CD8-positive, alpha-beta memory T cell (primary cell): ENCODE measurements at regions of chr16 and their contacts with region 1.

Region 1: GRCh38 chr16:48632137-48632774 is 22.3 kb upstream of the N4BP1 start:
- DNase-seq: no peak
- H3K4me3 ChIP-seq: no peak overlapping the region
- H3K4me3 Mint-ChIP-seq: no peak overlapping the region
- H3K27ac ChIP-seq: no peak overlapping the region
- H3K27ac Mint-ChIP-seq: no peak overlapping the region
- H3K4me1 ChIP-seq: no peaks in the 10 kb centered on the region
- H3K4me1 Mint-ChIP-seq: peaks cover 4 to 7% (median 7%) of the 10 kb centered on the region in 3 donors
- H3K27me3 ChIP-seq: no peaks in the 10 kb centered on the region
- H3K27me3 Mint-ChIP-seq: peaks cover 6 to 17% of the 10 kb centered on the region in 2 donors

Region 2: GRCh38 chr16:48318630-48319029 is 313.6 kb before region 1 on chr16:
- CTCF ChIA-PET with region 1: interaction called, 14 read pairs
- POLR2A ChIA-PET with region 1: no interaction called
- DNase-seq: peak in 3 of 5 donors; percentile 47 to 71 (median 56)
- H3K4me3 ChIP-seq: peak overlapping the region; percentile 40
- H3K4me3 Mint-ChIP-seq: peak overlapping the region; percentile 26 to 75 (median 66)
- H3K27ac ChIP-seq: no peak overlapping the region
- H3K27ac Mint-ChIP-seq: peak overlapping the region; percentile 36 to 89 (median 72)
- H3K4me1 ChIP-seq: peaks cover 22% of the 10 kb centered on the region
- H3K4me1 Mint-ChIP-seq: peaks cover 28 to 48% (median 39%) of the 10 kb centered on the region in 3 donors
- H3K27me3 ChIP-seq: no peaks in the 10 kb centered on the region
- H3K27me3 Mint-ChIP-seq: no peaks in the 10 kb centered on the region

Region 3: DNA sequence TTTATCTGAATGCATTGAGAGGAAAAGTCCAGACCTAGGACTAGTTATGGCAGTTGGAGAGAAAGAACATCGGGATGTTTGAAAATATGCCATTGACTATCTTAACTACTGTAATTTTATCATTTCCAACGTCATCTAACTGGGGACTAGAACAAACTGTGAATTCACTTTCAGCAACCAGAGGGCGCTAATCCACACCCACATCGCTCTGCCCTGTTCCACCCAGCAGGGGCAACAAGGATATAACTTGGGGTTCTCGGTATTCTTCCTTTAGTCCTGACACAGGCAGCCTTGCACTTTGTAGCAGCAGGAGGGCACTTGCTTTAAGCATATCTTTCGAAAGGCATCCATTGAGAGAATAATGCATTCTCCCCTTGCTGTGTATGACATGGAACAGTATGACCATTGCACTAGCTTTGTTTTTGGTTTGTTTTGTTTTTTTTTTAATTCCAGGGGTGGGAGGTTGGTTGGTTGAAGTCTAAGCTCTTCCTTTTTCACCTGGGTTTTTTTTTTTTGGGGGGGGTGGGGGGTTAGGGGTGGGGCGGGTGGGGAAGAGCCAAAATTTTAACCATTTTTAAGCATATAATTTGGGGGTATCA is 278.6 kb before region 1 on chr16:
- CTCF ChIA-PET with region 1: interaction called, 65 read pairs
- POLR2A ChIA-PET with region 1: no interaction called
- DNase-seq: peak; percentile 44 to 78 (median 68)
- H3K4me3 ChIP-seq: no peak overlapping the region
- H3K4me3 Mint-ChIP-seq: no peak overlapping the region
- H3K27ac ChIP-seq: no peak overlapping the region
- H3K27ac Mint-ChIP-seq: peak overlapping the region in 7 of 8 donors; percentile 45 to 87 (median 66)
- H3K4me1 ChIP-seq: peaks cover 6% of the 10 kb centered on the region
- H3K4me1 Mint-ChIP-seq: peaks cover 5 to 11% (median 9%) of the 10 kb centered on the region in 3 donors
- H3K27me3 ChIP-seq: no peaks in the 10 kb centered on the region
- H3K27me3 Mint-ChIP-seq: no peaks in the 10 kb centered on the region

Region 4: GRCh38 chr16:48365581-48366164 is 266.6 kb before region 1 on chr16:
- CTCF ChIA-PET with region 1: interaction called, 10 read pairs
- POLR2A ChIA-PET with region 1: no interaction called
- DNase-seq: peak; percentile 59 to 81 (median 72)
- H3K4me3 ChIP-seq: peak overlapping the region; percentile 69
- H3K4me3 Mint-ChIP-seq: peak overlapping the region; percentile 85 to 96 (median 89)
- H3K27ac ChIP-seq: peak overlapping the region; percentile 90
- H3K27ac Mint-ChIP-seq: peak overlapping the region; percentile 41 to 95 (median 86)
- H3K4me1 ChIP-seq: peaks cover 22% of the 10 kb centered on the region
- H3K4me1 Mint-ChIP-seq: peaks cover 24 to 42% (median 40%) of the 10 kb centered on the region in 3 donors
- H3K27me3 ChIP-seq: no peaks in the 10 kb centered on the region
- H3K27me3 Mint-ChIP-seq: no peaks in the 10 kb centered on the region

Region 5: GRCh38 chr16:48526058-48526957 is 105.9 kb before region 1 on chr16:
- CTCF ChIA-PET with region 1: interaction called, 10 read pairs
- POLR2A ChIA-PET with region 1: no interaction called
- DNase-seq: no peak
- H3K4me3 ChIP-seq: no peak overlapping the region
- H3K4me3 Mint-ChIP-seq: no peak overlapping the region
- H3K27ac ChIP-seq: no peak overlapping the region
- H3K27ac Mint-ChIP-seq: peak overlapping the region in 1 of 8 donors; percentile 10
- H3K4me1 ChIP-seq: no peaks in the 10 kb centered on the region
- H3K4me1 Mint-ChIP-seq: no peaks in the 10 kb centered on the region
- H3K27me3 ChIP-seq: no peaks in the 10 kb centered on the region
- H3K27me3 Mint-ChIP-seq: no peaks in the 10 kb centered on the region

Region 6: DNA sequence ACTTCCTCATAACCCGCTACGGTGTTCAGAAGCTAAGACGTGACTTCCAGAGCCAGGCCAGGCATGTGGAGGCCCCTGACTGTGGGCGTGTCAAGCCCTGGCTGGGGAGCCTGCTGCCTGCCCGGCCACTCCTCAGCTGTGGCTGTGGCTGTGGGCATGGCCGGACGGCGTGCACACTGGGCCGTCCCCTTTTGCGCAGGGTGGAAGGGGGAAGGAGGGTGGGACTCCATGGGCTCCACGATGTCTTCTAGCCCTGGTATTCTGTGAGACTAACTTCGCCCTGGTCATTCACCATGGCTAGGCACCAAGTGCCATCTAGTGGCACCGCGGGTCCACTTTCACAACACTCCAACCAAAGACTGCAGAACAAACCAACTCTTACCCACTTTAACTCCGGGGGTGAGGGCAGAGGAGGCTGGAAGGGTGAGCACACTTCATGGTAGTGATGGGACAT is 90.2 kb before region 1 on chr16:
- CTCF ChIA-PET with region 1: interaction called, 19 read pairs
- POLR2A ChIA-PET with region 1: no interaction called
- DNase-seq: no peak
- H3K4me3 ChIP-seq: no peak overlapping the region
- H3K4me3 Mint-ChIP-seq: no peak overlapping the region
- H3K27ac ChIP-seq: no peak overlapping the region
- H3K27ac Mint-ChIP-seq: no peak overlapping the region
- H3K4me1 ChIP-seq: peaks cover 5% of the 10 kb centered on the region
- H3K4me1 Mint-ChIP-seq: peaks cover 9 to 25% (median 11%) of the 10 kb centered on the region in 3 donors
- H3K27me3 ChIP-seq: no peaks in the 10 kb centered on the region
- H3K27me3 Mint-ChIP-seq: no peaks in the 10 kb centered on the region

Region 7: DNA sequence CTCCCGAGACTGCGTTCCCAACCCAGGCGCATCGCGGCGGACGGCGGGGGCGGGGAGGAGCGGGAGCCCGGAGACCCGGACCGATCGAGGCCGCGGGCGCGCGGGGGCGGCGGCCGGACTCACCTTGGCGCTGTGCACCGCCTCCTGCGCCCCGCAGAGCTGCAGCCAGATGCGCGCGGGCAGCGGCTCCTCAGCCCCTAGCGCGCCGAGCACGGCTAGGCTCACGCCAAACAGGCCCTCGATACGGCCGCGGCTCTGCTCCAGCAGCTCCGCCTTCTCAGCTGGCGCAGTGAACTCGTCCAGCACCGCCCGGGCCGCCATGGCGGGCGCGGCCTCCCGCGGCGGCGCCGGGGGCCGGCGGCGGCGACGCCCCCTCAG is 22.6 kb before region 1 on chr16:
- CTCF ChIA-PET with region 1: interaction called, 15 read pairs
- POLR2A ChIA-PET with region 1: interaction called, 7 read pairs
- DNase-seq: no peak
- H3K4me3 ChIP-seq: peak overlapping the region; percentile 68
- H3K4me3 Mint-ChIP-seq: no peak overlapping the region
- H3K27ac ChIP-seq: peak overlapping the region; percentile 97
- H3K27ac Mint-ChIP-seq: peak overlapping the region; percentile 89 to 98 (median 94)
- H3K4me1 ChIP-seq: peaks cover 83% of the 10 kb centered on the region
- H3K4me1 Mint-ChIP-seq: peaks cover 41 to 45% (median 41%) of the 10 kb centered on the region in 3 donors
- H3K27me3 ChIP-seq: no peaks in the 10 kb centered on the region
- H3K27me3 Mint-ChIP-seq: peaks cover 0 to 6% of the 10 kb centered on the region in 2 donors

Region 8: GRCh38 chr16:48647794-48648193 is 15.5 kb after region 1 on chr16:
- CTCF ChIA-PET with region 1: no interaction called
- POLR2A ChIA-PET with region 1: no interaction called
- DNase-seq: no peak
- H3K4me3 ChIP-seq: no peak overlapping the region
- H3K4me3 Mint-ChIP-seq: no peak overlapping the region
- H3K27ac ChIP-seq: no peak overlapping the region
- H3K27ac Mint-ChIP-seq: no peak overlapping the region
- H3K4me1 ChIP-seq: no peaks in the 10 kb centered on the region
- H3K4me1 Mint-ChIP-seq: no peaks in the 10 kb centered on the region
- H3K27me3 ChIP-seq: no peaks in the 10 kb centered on the region
- H3K27me3 Mint-ChIP-seq: peaks cover 10 to 23% of the 10 kb centered on the region in 2 donors